ENCODE measurements at regions of chr5 and their contacts with region 1.

Region 1: GRCh38 chr5:76175051-76175666 is 92.0 kb downstream of the SV2C start:
- DNase-seq: peak; percentile 65 to 78 (median 68)
- ATAC-seq: peak; percentile 53
- H3K4me3 ChIP-seq: no peak overlapping the region
- H3K27ac ChIP-seq: no peak overlapping the region
- H3K4me1 ChIP-seq: no peaks in the 10 kb centered on the region
- H3K27me3 ChIP-seq: no peaks in the 10 kb centered on the region
- CTCF ChIP-seq: peak; percentile 60 to 78 (median 72)
- POLR2A ChIP-seq: no peak

Region 2: DNA sequence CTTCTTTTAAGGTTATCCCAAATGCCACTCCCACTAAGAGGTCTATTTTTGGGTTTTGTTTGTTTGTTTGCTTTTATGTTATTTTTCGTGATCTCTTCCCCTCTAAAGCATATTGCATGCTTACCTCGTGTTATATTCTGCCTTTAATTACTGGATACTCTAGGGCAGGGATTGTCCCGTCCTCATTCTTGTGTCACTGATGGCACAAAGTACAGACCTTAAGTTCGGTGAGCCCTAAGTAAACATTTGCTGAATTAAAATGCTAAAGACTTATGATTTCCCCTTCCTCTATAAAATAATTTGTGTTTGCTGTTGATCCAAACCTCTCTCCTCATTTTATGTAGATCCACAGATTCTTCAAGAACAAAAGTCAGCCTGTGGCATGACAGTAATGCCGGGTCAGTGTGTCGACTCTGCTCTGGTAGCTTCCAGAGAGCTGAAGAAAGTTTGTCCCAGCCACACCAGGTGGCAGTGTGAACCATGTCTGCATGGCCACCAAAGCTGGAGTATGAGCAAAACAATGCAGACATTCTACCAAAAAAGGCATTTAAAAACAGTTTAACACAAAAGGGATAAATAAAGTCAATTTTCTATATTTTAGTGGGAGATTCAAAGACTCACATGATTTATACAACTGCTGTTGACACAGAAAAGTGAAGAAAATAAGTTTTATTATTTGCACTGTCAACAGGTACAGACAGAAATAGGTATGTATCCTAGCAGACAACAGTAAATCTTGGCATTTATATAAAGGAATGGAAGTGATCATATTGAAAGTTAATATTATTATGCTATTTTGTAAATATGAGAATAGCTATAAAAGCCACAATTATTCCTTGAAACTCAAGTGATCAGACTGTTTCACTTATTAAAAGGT is 440.0 kb before region 1 on chr5:
- intact Hi-C with region 1: loop called (anchors 10 kb)
- DNase-seq: peak; percentile 56 to 72 (median 60)
- ATAC-seq: peak; percentile 67
- H3K4me3 ChIP-seq: no peak overlapping the region
- H3K27ac ChIP-seq: no peak overlapping the region
- H3K4me1 ChIP-seq: peaks cover 4% of the 10 kb centered on the region
- H3K27me3 ChIP-seq: no peaks in the 10 kb centered on the region
- CTCF ChIP-seq: peak in 6 of 7 experiments; percentile 40 to 74 (median 62)
- POLR2A ChIP-seq: no peak

Region 3: DNA sequence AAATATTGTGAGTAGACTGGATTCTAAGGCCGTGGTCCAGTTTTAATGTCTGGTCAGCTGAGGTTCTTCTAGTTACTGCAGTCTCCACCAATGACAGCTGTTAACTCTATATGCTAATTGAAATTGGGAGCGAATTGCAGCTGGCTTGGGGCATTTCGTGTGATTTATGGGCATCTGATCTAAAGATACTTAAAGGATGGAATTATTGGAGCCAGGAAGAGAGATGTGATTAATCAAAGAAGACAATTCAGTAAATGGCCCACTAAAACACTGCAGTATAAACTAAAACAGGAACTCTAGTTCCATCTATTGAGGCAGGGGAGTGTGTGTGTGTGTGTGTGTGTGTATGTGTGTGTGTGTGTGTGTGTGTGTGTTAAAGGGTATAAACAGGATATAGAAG is 70.4 kb after region 1 on chr5:
- intact Hi-C with region 1: no loop called
- DNase-seq: no peak
- ATAC-seq: no peak
- H3K4me3 ChIP-seq: no peak overlapping the region
- H3K27ac ChIP-seq: no peak overlapping the region
- H3K4me1 ChIP-seq: no peaks in the 10 kb centered on the region
- H3K27me3 ChIP-seq: no peaks in the 10 kb centered on the region
- CTCF ChIP-seq: no peak
- POLR2A ChIP-seq: no peak

Measured in body of pancreas (tissue), 4 donors.